Common myeloid progenitor, CD34-positive (primary cell): ENCODE measurements at regions of chr2 and their contacts with region 1.

Region 1: DNA sequence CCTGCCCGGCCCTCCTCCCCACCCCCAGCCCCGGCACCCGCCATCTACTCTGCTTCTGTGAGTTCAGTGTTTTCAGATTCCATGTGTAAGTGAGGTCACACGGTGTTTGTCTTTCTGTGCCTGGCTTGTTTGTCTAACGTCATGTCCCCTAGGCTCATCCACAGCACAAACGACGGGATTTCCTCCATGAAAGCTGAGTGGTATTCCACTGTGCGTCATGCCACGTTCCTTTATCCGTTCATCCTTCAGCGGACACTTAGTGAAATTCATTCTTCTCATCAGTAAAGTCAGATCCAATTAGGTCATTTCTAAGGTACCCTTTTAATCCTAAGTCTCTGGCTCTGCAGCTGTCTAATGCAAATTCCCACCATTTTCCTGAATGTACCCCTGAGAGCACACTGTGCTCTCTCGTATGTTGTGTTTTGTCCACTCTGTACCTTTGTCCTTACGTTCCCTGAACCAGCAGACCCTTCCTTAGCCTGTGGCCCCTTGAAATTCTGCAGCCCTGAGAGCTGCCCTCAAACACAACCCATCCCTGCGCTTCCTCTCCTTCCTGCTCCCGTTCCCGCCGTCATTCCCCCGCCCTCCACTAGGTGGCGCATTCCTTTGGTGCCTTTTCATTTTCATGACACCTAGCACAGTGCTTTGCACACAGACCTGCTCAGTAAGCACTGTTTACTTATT is 44.1 kb downstream of the TRAPPC12 start:
- DNase-seq: peak; percentile 44 to 58 (median 50)
- H3K4me3 ChIP-seq: no peak overlapping the region
- H3K27ac ChIP-seq: no peak overlapping the region
- H3K4me1 ChIP-seq: no peaks in the 10 kb centered on the region
- H3K27me3 ChIP-seq: no peaks in the 10 kb centered on the region

Region 2: DNA sequence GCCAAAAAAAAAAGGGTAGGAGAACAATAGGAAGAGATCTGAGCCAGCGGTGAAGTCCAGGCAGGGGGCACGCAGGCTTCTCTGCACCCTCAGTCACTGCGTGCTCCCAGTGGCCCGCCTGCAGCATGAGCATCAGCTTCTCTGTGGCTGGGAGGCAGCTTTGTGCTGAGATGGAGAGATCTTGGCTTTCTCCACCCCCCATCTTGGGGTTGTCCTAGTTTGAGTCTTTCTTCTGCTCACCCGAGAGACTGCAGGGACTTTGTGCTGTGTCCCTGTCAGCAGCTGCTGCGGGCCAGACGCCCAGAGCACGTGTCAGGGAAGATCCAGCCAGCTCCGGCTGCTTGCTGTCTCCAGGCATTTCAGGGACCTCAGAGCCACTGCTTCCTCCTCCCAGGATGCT is 23.8 kb before region 1 on chr2:
- CTCF ChIA-PET with region 1: interaction called, 19 read pairs
- POLR2A ChIA-PET with region 1: no interaction called
- DNase-seq: no peak
- H3K4me3 ChIP-seq: no peak overlapping the region
- H3K27ac ChIP-seq: no peak overlapping the region
- H3K4me1 ChIP-seq: no peaks in the 10 kb centered on the region
- H3K27me3 ChIP-seq: no peaks in the 10 kb centered on the region

Region 3: GRCh38 chr2:3651691-3652648 is 228.3 kb after region 1 on chr2:
- CTCF ChIA-PET with region 1: interaction called, 12 read pairs
- POLR2A ChIA-PET with region 1: no interaction called
- DNase-seq: peak; percentile 61 to 90 (median 85)
- H3K4me3 ChIP-seq: peak overlapping the region in 6 of 7 experiments; percentile 22 to 70 (median 40)
- H3K27ac ChIP-seq: no peak overlapping the region
- H3K4me1 ChIP-seq: peaks cover 0 to 15% (median 11%) of the 10 kb centered on the region in 4 experiments
- H3K27me3 ChIP-seq: peaks cover 0 to 8% (median 0%) of the 10 kb centered on the region in 5 experiments

Region 4: GRCh38 chr2:3712831-3713503 is 289.3 kb after region 1 on chr2:
- CTCF ChIA-PET with region 1: no interaction called
- POLR2A ChIA-PET with region 1: no interaction called
- DNase-seq: no peak
- H3K4me3 ChIP-seq: no peak overlapping the region
- H3K27ac ChIP-seq: no peak overlapping the region
- H3K4me1 ChIP-seq: no peaks in the 10 kb centered on the region
- H3K27me3 ChIP-seq: peaks cover 0 to 13% (median 2%) of the 10 kb centered on the region in 5 experiments